ENCODE measurements at regions of chr19 and their contacts with region 1.

Region 1: GRCh38 chr19:47745010-47745901 is at the start of gene NOP53:
- DNase-seq: peak; percentile 98
- ATAC-seq: peak; percentile 80
- H3K4me3 ChIP-seq: peak within 1 kb of the TSS; percentile 51 to 97 (median 85)
- H3K4me3 Mint-ChIP-seq: peak within 1 kb of the TSS; percentile 100
- H3K27ac ChIP-seq: peak within 1 kb of the TSS; percentile 93 to 99
- H3K27ac Mint-ChIP-seq: peak within 1 kb of the TSS; percentile 100
- H3K4me1 ChIP-seq: peaks cover 31 to 59% of the 10 kb centered on the region in 2 donors
- H3K4me1 Mint-ChIP-seq: peaks cover 42% of the 10 kb centered on the region
- H3K27me3 ChIP-seq: no peaks in the 10 kb centered on the region
- H3K27me3 Mint-ChIP-seq: no peaks in the 10 kb centered on the region
- CTCF ChIP-seq: no peak
- total RNA-seq, gene NOP53: 921 and 978 TPM in 2 replicates

Region 2: GRCh38 chr19:47436712-47437401 is 308.4 kb before region 1 on chr19:
- CTCF ChIA-PET with region 1: interaction called, 17 read pairs
- POLR2A ChIA-PET with region 1: no interaction called
- intact Hi-C with region 1: no loop called
- DNase-seq: peak; percentile 84
- ATAC-seq: peak; percentile 92
- H3K4me3 ChIP-seq: no peak overlapping the region
- H3K4me3 Mint-ChIP-seq: no peak overlapping the region
- H3K27ac ChIP-seq: no peak overlapping the region
- H3K27ac Mint-ChIP-seq: no peak overlapping the region
- H3K4me1 ChIP-seq: peaks cover 3 to 6% of the 10 kb centered on the region in 2 donors
- H3K4me1 Mint-ChIP-seq: peaks cover 5% of the 10 kb centered on the region
- H3K27me3 ChIP-seq: peaks cover 0 to 71% (median 25%) of the 10 kb centered on the region in 4 experiments
- H3K27me3 Mint-ChIP-seq: peaks cover 70% of the 10 kb centered on the region
- CTCF ChIP-seq: peak; percentile 89

Region 3: DNA sequence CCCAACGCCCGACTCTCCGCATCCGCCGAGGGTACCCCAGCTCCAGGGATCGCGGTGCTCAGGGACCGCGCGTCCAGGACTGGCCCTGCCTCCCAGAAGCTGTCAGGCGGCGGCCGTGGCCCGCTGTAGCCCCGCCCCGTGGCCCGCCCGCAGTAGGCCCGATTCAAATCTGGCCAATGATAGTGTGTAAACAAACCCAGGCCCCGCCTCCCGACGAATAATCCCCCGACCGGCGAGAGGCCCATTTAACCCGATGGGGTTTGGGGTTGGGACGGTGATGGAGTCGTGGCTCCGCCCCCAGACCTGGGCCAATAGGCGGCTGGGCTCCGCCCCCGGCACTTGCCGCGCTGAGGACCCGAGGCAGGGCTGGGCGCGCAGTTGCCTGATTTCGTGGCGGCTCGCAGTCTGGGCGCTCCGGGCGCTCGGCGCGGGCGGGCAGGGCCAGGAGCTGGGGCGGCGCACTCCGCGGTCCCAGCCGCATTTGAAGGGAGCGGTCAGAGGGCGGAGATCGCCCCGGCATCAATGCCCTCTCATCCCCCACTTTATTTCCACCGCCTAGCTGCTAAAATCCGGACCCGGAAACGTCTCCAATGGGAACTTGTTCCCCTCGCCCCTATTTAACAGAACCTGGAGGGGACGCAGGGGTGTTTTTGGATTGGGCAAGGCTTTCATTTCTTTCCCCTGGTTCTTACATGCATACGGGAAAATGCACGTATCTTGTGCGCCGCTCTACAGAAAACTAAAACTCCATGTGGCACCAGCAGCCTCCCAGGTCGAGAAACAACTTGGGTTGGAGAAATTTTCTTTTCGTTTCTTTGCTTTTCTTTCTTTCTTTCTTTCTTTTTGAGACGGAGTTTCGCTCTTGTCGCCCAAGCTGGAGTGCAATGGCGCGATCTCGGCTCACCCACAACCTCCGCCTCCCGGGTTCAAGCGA is 144.7 kb before region 1 on chr19:
- CTCF ChIA-PET with region 1: no interaction called
- POLR2A ChIA-PET with region 1: interaction called, 11 read pairs
- intact Hi-C with region 1: no loop called
- DNase-seq: peak; percentile 99
- ATAC-seq: peak; percentile 96
- H3K4me3 ChIP-seq: peak overlapping the region; percentile 63 to 79 (median 71)
- H3K4me3 Mint-ChIP-seq: peak overlapping the region; percentile 80
- H3K27ac ChIP-seq: peak overlapping the region; percentile 62 to 83
- H3K27ac Mint-ChIP-seq: peak overlapping the region; percentile 70
- H3K4me1 ChIP-seq: peaks cover 12 to 18% of the 10 kb centered on the region in 2 donors
- H3K4me1 Mint-ChIP-seq: peaks cover 11% of the 10 kb centered on the region
- H3K27me3 ChIP-seq: peaks cover 0 to 28% (median 3%) of the 10 kb centered on the region in 4 experiments
- H3K27me3 Mint-ChIP-seq: peaks cover 21% of the 10 kb centered on the region
- CTCF ChIP-seq: no peak

Region 4: GRCh38 chr19:47608074-47608918 is 137.0 kb before region 1 on chr19:
- CTCF ChIA-PET with region 1: no interaction called
- POLR2A ChIA-PET with region 1: no interaction called
- intact Hi-C with region 1: loop called (anchors 2 kb)
- DNase-seq: peak; percentile 96
- ATAC-seq: peak; percentile 92
- H3K4me3 ChIP-seq: peak overlapping the region; percentile 50 to 98 (median 92)
- H3K4me3 Mint-ChIP-seq: peak overlapping the region; percentile 69
- H3K27ac ChIP-seq: peak overlapping the region; percentile 79 to 96
- H3K27ac Mint-ChIP-seq: peak overlapping the region; percentile 86
- H3K4me1 ChIP-seq: peaks cover 16 to 18% of the 10 kb centered on the region in 2 donors
- H3K4me1 Mint-ChIP-seq: peaks cover 28% of the 10 kb centered on the region
- H3K27me3 ChIP-seq: peaks cover 0 to 11% (median 0%) of the 10 kb centered on the region in 4 experiments
- H3K27me3 Mint-ChIP-seq: no peaks in the 10 kb centered on the region
- CTCF ChIP-seq: peak; percentile 13

Region 5: DNA sequence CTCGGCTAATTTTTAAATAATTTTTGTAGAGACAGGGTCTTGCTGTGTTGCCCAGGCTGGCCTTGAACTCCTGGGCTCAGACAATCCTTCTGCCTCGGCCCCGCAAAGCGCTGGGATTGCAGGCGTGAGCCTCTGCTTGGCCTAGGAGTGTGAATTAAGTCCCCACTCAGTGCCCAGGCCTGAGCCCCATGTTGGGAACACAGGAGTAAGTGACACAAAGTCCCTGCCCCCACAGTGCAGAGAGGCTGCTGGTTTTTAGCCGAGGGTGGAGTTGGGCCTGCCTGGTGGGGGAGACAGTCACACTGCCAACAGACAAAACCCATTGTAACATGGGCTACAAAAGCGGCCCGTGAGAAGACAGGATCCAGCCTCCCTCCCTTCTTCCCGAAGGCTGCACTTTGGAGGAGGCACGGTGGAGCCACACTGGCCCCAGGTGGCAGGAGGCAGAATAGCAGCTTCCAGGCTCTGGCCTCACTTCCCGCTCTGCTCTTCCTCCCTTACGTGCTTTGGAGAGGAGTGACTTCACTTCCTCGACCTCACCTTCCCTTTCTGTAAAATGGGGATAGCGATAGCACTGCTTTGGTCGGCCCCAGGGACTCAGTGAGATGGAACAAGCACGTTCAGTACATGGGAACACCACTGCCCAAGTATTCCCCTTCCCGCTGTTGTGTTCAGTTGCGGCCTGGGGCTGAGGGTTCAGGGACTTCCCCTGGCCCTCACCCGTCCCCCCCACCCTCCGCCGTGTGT is 47.2 kb before region 1 on chr19:
- CTCF ChIA-PET with region 1: interaction called, 3 read pairs
- POLR2A ChIA-PET with region 1: no interaction called
- intact Hi-C with region 1: loop called (anchors 2 kb)
- DNase-seq: peak; percentile 70
- ATAC-seq: peak; percentile 60
- H3K4me3 ChIP-seq: no peak overlapping the region
- H3K4me3 Mint-ChIP-seq: no peak overlapping the region
- H3K27ac ChIP-seq: no peak overlapping the region
- H3K27ac Mint-ChIP-seq: no peak overlapping the region
- H3K4me1 ChIP-seq: no peaks in the 10 kb centered on the region
- H3K4me1 Mint-ChIP-seq: no peaks in the 10 kb centered on the region
- H3K27me3 ChIP-seq: no peaks in the 10 kb centered on the region
- H3K27me3 Mint-ChIP-seq: no peaks in the 10 kb centered on the region
- CTCF ChIP-seq: peak; percentile 84

Region 6: DNA sequence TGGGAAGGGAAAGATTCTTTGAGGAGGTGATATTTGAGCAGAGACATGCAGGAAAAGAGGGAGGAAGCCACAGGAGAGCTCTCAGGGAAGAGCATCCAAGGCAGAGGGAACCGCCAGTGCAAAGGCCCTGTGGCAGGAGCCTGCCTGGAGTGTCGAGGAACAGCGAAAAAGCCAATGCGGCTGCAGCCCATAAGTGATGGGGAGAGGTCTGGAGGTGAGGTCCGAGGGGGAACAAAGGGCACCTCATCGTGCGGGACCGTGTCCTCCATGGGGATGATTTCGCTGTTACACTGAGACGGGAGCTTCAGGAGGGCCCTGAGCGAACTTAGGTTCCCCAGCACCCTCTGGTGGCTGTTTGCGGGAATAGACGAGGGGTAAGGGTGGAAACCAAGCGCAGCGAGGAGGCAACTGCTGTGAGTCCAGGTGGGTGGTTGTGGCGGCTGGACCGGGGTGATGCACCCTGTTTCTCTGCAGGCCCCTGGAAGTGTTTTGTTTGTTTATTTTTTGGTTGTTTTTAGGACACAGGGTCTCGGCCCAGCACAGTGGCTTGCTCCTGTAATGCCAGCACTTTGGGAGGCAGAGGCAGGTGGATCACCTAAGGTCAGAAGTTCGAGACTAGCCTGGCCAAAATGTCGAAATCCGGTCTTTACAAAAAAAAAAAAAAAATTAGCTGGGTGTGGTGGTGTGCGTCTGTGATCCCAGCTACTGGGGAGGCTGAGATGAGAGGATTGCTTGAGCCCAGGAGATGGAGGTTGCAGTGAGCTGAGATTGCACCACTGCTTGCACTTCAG is 37.9 kb before region 1 on chr19:
- CTCF ChIA-PET with region 1: interaction called, 4 read pairs
- POLR2A ChIA-PET with region 1: no interaction called
- intact Hi-C with region 1: loop called (anchors 2 kb)
- DNase-seq: peak; percentile 73
- ATAC-seq: peak; percentile 73
- H3K4me3 ChIP-seq: no peak overlapping the region
- H3K4me3 Mint-ChIP-seq: no peak overlapping the region
- H3K27ac ChIP-seq: no peak overlapping the region
- H3K27ac Mint-ChIP-seq: no peak overlapping the region
- H3K4me1 ChIP-seq: no peaks in the 10 kb centered on the region
- H3K4me1 Mint-ChIP-seq: no peaks in the 10 kb centered on the region
- H3K27me3 ChIP-seq: peaks cover 0 to 10% (median 6%) of the 10 kb centered on the region in 4 experiments
- H3K27me3 Mint-ChIP-seq: peaks cover 16% of the 10 kb centered on the region
- CTCF ChIP-seq: peak; percentile 69

Region 7: DNA sequence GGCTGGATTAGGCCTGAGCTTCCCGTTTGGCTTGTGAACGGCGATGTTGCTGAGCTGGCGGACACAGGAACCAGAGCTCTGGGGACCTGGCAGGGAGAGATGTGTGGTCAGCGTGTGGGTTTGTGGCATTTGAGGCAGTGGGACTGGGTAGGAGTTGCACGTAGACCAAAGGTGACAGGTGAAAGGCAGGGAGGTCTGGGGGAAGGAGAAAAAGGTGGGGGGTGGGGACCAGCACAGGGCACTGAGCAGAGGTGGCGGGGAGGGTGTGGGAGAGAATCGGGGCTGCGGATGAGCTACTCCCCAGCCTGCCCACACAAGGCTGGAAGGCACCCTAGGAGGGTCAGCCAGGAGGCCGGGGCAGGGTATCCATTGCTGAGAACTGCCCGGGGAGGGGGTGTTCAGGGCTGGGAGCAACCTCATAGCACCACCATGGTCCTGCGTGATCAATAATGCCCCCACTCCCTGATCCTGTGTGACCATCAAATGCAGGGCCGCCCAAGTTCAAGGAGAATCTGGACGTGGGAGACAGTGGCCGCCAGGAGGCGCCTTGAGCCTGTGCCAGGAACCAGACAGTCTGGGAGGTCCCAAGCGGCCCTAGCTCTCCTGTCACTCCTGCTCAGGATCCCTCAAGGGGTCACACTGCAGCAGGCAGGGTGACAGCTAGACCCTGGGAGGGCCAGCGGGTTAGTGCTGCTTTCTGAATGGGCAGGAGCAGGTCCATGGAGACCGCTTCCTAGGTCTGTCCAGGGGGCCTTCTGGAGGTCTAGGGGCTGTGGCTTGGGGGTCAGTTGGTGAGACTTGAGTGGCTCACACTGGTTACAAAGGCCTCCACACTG is 20.5 kb after region 1 on chr19:
- CTCF ChIA-PET with region 1: no interaction called
- POLR2A ChIA-PET with region 1: no interaction called
- intact Hi-C with region 1: no loop called
- DNase-seq: peak; percentile 57
- ATAC-seq: peak; percentile 45
- H3K4me3 ChIP-seq: no peak overlapping the region
- H3K4me3 Mint-ChIP-seq: no peak overlapping the region
- H3K27ac ChIP-seq: no peak overlapping the region
- H3K27ac Mint-ChIP-seq: no peak overlapping the region
- H3K4me1 ChIP-seq: no peaks in the 10 kb centered on the region
- H3K4me1 Mint-ChIP-seq: no peaks in the 10 kb centered on the region
- H3K27me3 ChIP-seq: no peaks in the 10 kb centered on the region
- H3K27me3 Mint-ChIP-seq: no peaks in the 10 kb centered on the region
- CTCF ChIP-seq: peak; percentile 57

Region 8: DNA sequence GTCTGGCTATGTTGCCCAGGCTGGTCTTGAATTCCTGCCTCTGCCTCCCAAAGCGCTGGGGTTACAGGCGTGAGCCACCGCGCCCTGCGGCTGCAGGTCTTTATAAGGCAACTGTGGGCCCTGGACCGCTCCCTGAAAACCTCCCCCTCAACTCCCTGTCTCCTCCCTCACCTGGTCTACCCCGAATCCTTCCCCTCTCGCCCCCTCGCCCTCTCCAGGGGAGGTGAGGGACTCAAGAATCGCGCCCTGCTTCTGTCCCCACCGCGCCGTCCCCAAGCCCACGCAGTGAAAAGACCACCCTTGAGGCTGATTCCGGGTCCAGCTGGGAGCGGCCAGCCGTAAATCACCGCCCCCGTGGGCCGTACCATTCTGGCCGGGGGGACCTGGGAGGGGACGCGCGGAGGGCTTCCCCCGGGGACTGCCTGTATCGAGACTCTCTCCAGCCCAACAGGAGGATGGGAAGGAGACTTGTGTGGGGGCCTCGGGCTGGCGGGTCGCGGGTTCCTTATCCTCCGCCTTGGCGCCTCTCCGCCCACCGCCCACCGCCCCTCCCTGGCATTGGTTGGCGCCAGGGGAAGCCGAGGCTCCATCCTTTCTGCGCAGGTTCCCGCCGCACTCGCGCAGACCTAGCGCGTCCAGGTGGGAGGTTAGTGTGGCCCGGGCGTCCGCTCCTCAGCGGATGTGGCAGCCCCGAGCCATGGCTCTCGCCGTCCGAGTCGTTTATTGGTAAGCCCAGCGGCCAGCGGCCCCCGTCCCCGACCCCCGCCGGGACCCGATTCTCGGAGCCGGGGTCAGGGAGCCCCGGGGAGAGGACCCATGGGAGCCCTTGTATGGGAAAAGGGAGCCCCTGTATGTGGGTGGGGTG is 33.1 kb after region 1 on chr19 and contains the start of gene SELENOW:
- CTCF ChIA-PET with region 1: no interaction called
- POLR2A ChIA-PET with region 1: interaction called, 7 read pairs
- intact Hi-C with region 1: loop called (anchors 1 kb)
- DNase-seq: peak; percentile 91
- ATAC-seq: peak; percentile 94
- H3K4me3 ChIP-seq: peak within 1 kb of the TSS; percentile 4 to 80 (median 74)
- H3K4me3 Mint-ChIP-seq: peak within 1 kb of the TSS; percentile 98
- H3K27ac ChIP-seq: peak within 1 kb of the TSS; percentile 87 to 91
- H3K27ac Mint-ChIP-seq: peak within 1 kb of the TSS; percentile 98
- H3K4me1 ChIP-seq: peaks cover 9 to 19% of the 10 kb centered on the region in 2 donors
- H3K4me1 Mint-ChIP-seq: peaks cover 20% of the 10 kb centered on the region
- H3K27me3 ChIP-seq: no peaks in the 10 kb centered on the region
- H3K27me3 Mint-ChIP-seq: no peaks in the 10 kb centered on the region
- CTCF ChIP-seq: no peak
- total RNA-seq, gene SELENOW: 46.3 and 47.7 TPM in 2 replicates